Activated naive CD4-positive, alpha-beta T cell treated with anti-CD3 and anti-CD28 coated beads, Interleukin-2, amount 10 ng/mL, durations not matched to agents 7 days and 5 days (primary cell): ENCODE measurements at regions of chr10 and their contacts with region 1.

Region 1: GRCh38 chr10:70549962-70550458 is 52.5 kb downstream of the PRF1 start:
- DNase-seq: peak; percentile 83
- H3K4me3 Mint-ChIP-seq: no peak overlapping the region
- H3K27ac Mint-ChIP-seq: no peak overlapping the region
- H3K4me1 Mint-ChIP-seq: no peaks in the 10 kb centered on the region
- H3K27me3 Mint-ChIP-seq: peaks cover 7% of the 10 kb centered on the region

Region 2: GRCh38 chr10:70758757-70759514 is 208.9 kb after region 1 on chr10:
- CTCF ChIA-PET with region 1: interaction called, 71 read pairs
- DNase-seq: peak; percentile 78
- H3K4me3 Mint-ChIP-seq: no peak overlapping the region
- H3K27ac Mint-ChIP-seq: no peak overlapping the region
- H3K4me1 Mint-ChIP-seq: no peaks in the 10 kb centered on the region
- H3K27me3 Mint-ChIP-seq: peaks cover 32% of the 10 kb centered on the region

Region 3: GRCh38 chr10:70880077-70880534 is 330.1 kb after region 1 on chr10:
- CTCF ChIA-PET with region 1: interaction called, 24 read pairs
- DNase-seq: peak; percentile 84
- H3K4me3 Mint-ChIP-seq: no peak overlapping the region
- H3K27ac Mint-ChIP-seq: no peak overlapping the region
- H3K4me1 Mint-ChIP-seq: no peaks in the 10 kb centered on the region
- H3K27me3 Mint-ChIP-seq: no peaks in the 10 kb centered on the region